BJ (cell line): ENCODE measurements at regions of chr11 and their contacts with region 1.

Region 1: DNA sequence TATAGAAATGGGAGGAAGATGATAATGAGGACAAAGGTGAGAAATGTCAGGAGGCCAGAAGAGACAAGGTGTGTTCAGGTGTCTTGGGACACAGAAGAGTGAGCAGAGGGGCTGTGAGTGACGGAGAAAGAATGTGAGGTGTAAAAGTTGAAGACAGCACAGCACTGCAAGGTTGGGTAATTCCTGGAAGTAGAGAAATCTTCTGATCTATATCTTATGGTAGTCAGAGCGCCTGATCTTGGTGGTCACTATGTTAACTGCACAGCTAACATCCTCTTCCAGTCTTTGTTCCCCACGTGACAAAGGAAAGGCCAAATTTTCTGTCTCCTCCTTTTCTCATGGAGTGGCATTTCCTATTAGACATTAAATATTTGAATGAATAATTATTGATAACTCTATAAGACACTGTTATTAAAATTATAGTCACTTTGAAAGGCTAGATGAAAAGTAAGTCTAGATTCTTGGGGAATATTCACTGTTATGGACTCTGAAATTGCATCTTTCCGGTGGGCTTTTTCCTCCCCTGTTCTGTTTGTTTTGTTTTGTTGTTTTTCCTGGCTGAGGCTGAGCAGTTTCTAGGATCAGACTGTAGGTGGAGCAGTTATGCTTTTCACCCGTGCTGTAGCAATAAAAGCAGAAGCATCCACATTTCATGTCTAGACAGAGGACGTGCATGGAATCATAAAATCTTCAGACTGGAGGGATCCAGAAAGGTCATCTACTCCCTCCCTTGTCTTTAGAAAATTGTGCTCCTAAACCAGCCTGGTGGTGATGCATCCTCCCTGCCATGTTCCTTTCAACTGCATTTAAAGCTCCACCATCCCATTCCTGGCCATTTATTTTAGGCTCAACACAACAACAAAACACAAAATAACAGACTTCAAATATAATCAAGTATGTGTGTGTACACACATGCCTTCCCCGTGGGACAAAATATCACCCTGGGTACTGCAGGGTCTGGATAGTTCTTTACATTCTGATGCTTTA is 26.6 kb downstream of the SC5D start:
- DNase-seq: peak; percentile 9
- H3K4me3 ChIP-seq: no peak overlapping the region
- H3K27me3 ChIP-seq: 0 out of 2 replicates have a peak, but pooled peaks cover 1% of the 10 kb centered on the region
- CTCF ChIP-seq: peak; percentile 83

Region 2: DNA sequence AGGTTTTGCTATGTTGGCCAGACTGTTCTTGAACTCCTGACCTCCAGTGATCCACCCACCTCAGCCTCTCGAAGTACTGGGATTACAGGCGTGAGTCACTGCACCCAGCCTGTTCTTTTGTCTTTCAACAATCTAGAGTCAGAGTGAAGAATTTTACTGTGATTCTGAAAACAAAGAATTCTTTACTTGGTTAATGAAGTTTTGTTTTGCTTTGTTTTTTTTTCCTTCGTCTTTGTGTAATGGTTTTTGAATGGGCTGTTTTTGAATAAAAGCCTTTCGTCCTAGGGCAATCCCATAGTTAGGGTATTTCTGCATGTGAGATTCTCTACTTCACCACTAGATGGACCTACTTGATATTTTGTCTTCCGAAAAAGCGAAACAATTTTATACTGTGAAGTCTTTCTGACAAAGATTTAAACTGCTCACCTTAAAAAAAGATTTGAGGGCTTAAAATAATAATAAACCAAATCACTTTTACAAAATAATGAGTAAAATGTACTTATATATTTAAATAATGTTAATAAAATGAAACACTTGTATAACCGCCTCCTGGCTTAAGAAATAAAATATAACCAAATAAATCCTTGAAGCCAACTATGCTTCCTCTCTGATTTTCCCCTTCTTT is 70.0 kb before region 1 on chr11:
- CTCF ChIA-PET with region 1: no interaction called
- POLR2A ChIA-PET with region 1: no interaction called
- DNase-seq: peak; percentile 11
- H3K4me3 ChIP-seq: no peak overlapping the region
- H3K27me3 ChIP-seq: no peaks in the 10 kb centered on the region
- CTCF ChIP-seq: peak; percentile 77

Region 3: GRCh38 chr11:121534131-121535093 is 215.3 kb after region 1 on chr11:
- CTCF ChIA-PET with region 1: interaction called, 22 read pairs
- POLR2A ChIA-PET with region 1: no interaction called
- DNase-seq: no peak
- H3K4me3 ChIP-seq: no peak overlapping the region
- H3K27me3 ChIP-seq: no peaks in the 10 kb centered on the region
- CTCF ChIP-seq: peak; percentile 68

Region 4: GRCh38 chr11:121591405-121592033 is 272.4 kb after region 1 on chr11:
- CTCF ChIA-PET with region 1: interaction called, 34 read pairs
- POLR2A ChIA-PET with region 1: no interaction called
- DNase-seq: peak; percentile 23
- H3K4me3 ChIP-seq: no peak overlapping the region
- H3K27me3 ChIP-seq: no peaks in the 10 kb centered on the region
- CTCF ChIP-seq: peak; percentile 82